A673 (cell line): ENCODE measurements at regions of chr4 and their contacts with region 1.

Region 1: DNA sequence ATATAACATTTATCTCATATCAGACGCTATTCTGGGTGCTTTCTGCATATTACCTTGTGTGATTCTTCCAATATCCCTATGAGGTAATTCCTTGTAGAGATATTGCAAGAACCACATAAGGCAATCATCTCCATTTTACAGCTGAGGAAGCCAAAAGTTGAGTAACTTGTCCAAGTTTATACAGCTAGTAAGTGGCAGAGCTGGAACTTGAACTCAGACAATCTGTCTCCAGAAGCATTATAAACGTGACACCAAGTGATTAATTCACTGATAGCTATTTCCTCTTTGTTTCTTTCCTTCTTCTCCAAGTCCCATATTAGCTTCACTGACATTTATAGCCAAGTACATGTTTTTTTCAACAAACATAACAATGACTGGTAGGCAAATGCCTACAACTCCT is 7.3 kb downstream of the EMCN start:
- DNase-seq: peak; percentile 89
- H3K4me3 ChIP-seq: no peak overlapping the region
- H3K27ac ChIP-seq: peak overlapping the region; percentile 71
- H3K4me1 ChIP-seq: peaks cover 60% of the 10 kb centered on the region
- H3K27me3 ChIP-seq: no peaks in the 10 kb centered on the region
- CTCF ChIP-seq: no peak

Region 2: DNA sequence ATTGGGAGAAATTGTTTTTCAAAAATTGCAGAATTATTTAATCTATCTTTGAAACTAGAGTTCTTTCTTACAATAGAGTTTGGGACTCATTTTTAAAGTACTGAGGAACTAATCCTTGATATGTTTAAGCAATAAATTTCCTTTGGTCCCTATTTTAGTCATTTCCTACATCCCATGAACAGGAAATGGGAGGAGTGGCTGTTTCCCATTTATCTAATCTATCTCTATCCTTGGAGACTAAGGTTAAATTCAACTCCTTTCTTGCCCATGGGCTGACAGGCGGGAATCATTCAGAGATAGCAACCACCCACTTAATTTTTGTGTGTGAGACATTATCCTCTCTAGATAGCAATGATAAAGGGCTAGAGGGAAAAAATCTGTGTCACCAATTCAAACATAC is 138.9 kb after region 1 on chr4:
- CTCF ChIA-PET with region 1: no interaction called
- POLR2A ChIA-PET with region 1: no interaction called
- intact Hi-C with region 1: loop called (anchors 2 kb)
- DNase-seq: peak; percentile 97
- H3K4me3 ChIP-seq: no peak overlapping the region
- H3K27ac ChIP-seq: peak overlapping the region; percentile 6
- H3K4me1 ChIP-seq: peaks cover 34% of the 10 kb centered on the region
- H3K27me3 ChIP-seq: no peaks in the 10 kb centered on the region
- CTCF ChIP-seq: no peak

Region 3: DNA sequence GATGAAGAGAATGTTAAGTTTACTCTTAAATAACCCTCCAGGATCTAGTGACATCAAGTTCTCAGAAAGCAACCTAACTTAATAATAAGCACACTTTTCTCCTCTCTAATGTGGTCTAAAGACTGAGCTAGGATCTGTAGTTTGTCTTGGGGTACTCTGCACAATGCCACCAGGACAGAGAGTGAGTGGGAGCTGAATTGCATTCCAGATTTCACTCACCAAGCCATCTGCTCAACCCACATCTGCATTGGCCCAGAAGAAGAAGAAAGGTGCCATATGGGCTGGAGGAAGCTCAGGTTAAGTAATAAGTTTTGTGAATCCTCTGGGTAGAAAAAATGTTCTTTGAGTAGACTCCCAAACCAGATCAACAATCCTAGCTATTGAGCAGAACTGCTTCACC is 452.1 kb after region 1 on chr4:
- CTCF ChIA-PET with region 1: no interaction called
- POLR2A ChIA-PET with region 1: no interaction called
- intact Hi-C with region 1: no loop called
- DNase-seq: no peak
- H3K4me3 ChIP-seq: no peak overlapping the region
- H3K27ac ChIP-seq: no peak overlapping the region
- H3K4me1 ChIP-seq: no peaks in the 10 kb centered on the region
- H3K27me3 ChIP-seq: no peaks in the 10 kb centered on the region
- CTCF ChIP-seq: no peak